Activated T-helper 1 cell treated with anti-CD3 and anti-CD28 coated beads, Interleukin-12 subunit alpha, Interleukin-12 subunit beta, Interleukin-2, Interleukin-4 antibody, amounts not matched to agents 30 ng/mL and 10 ng/mL and 1 ng/mL, durations not matched to agents 14 hours and 24 hours and 36 hours (primary cell): ENCODE measurements at regions of chr19 and their contacts with region 1.

Region 1: GRCh38 chr19:45670670-45671453 is 2.8 kb downstream of the GIPR start:
- DNase-seq: peak; percentile 68
- H3K4me3 Mint-ChIP-seq: peak overlapping the region; percentile 64
- H3K27ac Mint-ChIP-seq: peak overlapping the region; percentile 63
- H3K4me1 Mint-ChIP-seq: peaks cover 30% of the 10 kb centered on the region
- H3K27me3 Mint-ChIP-seq: peaks cover 10% of the 10 kb centered on the region

Region 2: DNA sequence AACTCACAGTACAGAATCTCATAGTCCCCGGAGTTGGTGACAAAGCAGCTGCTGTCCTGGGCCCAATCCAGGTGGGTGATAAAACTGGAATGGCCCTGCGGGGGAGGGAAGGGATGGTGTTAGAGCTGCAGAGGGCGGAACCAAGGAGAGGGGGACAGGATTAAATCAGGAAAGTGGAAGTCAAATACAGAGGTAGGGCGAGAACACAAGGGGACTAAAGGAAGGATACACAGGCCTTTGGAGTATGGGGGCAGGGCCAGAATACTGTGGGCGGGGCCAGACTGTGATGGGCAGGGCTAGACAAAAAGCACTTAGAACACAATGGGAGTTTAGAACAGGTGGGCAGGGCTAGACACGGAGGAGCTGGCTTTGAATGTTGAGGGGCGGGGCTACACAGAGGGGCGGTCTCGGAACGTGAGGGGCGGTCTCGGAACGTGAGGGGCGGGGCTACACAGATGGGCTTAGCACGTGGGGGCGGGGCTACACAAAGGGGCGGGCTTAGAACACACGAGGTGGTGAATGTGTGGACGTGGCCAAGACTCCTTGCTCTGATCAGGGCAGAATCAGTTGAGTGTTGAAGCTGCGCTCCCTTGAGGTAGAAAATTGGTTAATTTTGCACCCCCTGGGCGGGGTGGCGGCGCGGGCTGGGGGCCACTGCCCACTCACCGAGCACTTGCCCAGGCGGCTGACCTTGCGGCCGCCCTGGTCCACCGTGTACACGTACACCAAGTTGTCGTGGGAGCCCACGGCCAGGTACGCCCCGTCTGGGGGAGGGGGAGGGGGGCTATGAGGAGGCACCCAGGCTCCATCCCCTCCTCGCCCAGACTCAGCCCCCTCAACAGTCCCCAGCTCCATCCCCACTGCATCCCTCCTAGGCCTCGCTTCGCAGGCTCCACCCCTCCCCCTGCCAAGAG is 54.8 kb before region 1 on chr19:
- intact Hi-C with region 1: loop called (anchors 2 kb)
- DNase-seq: peak; percentile 66
- H3K4me3 Mint-ChIP-seq: no peak overlapping the region
- H3K27ac Mint-ChIP-seq: peak overlapping the region; percentile 52
- H3K4me1 Mint-ChIP-seq: peaks cover 13% of the 10 kb centered on the region
- H3K27me3 Mint-ChIP-seq: no peaks in the 10 kb centered on the region

Region 3: GRCh38 chr19:45657520-45658167 is 13.2 kb before region 1 on chr19:
- intact Hi-C with region 1: no loop called
- DNase-seq: no peak
- H3K4me3 Mint-ChIP-seq: no peak overlapping the region
- H3K27ac Mint-ChIP-seq: no peak overlapping the region
- H3K4me1 Mint-ChIP-seq: no peaks in the 10 kb centered on the region
- H3K27me3 Mint-ChIP-seq: peaks cover 13% of the 10 kb centered on the region

Region 4: DNA sequence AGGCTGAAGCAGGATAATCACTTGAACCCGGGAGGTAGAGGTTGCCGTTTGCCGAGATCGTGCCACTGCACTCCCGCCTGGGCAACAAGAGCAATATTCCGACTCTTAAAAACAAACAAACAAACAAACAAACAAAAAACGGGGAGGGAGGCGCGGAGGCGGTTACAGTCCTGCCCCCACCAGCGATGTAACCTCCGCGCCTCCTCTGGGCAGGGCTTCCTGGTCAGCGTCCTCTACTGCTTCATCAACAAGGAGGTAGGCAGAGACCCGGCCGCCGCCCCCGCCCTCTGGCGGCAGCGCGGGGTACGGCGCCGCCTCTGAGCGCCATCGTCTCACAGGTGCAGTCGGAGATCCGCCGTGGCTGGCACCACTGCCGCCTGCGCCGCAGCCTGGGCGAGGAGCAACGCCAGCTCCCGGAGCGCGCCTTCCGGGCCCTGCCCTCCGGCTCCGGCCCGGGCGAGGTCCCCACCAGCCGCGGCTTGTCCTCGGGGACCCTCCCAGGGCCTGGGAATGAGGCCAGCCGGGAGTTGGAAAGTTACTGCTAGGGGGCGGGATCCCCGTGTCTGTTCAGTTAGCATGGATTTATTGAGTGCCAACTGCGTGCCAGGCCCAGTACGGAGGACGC is 10.6 kb after region 1 on chr19:
- intact Hi-C with region 1: loop called (anchors 1 kb)
- DNase-seq: peak; percentile 87
- H3K4me3 Mint-ChIP-seq: peak overlapping the region; percentile 80
- H3K27ac Mint-ChIP-seq: peak overlapping the region; percentile 82
- H3K4me1 Mint-ChIP-seq: peaks cover 20% of the 10 kb centered on the region
- H3K27me3 Mint-ChIP-seq: peaks cover 2% of the 10 kb centered on the region